Activated naive CD4-positive, alpha-beta T cell treated with anti-CD3 and anti-CD28 coated beads for 36 hours (primary cell): ENCODE measurements at regions of chr10 and their contacts with region 1.

Region 1: GRCh38 chr10:5684318-5684970 is at the start of gene TASOR2:
- DNase-seq: peak; percentile 98
- H3K4me3 Mint-ChIP-seq: peak within 1 kb of the TSS; percentile 87
- H3K27ac Mint-ChIP-seq: peak within 1 kb of the TSS; percentile 94
- H3K4me1 Mint-ChIP-seq: peaks cover 45% of the 10 kb centered on the region
- H3K27me3 Mint-ChIP-seq: no peaks in the 10 kb centered on the region
- total RNA-seq, gene TASOR2: 36.4 to 37.7 TPM

Region 2: DNA sequence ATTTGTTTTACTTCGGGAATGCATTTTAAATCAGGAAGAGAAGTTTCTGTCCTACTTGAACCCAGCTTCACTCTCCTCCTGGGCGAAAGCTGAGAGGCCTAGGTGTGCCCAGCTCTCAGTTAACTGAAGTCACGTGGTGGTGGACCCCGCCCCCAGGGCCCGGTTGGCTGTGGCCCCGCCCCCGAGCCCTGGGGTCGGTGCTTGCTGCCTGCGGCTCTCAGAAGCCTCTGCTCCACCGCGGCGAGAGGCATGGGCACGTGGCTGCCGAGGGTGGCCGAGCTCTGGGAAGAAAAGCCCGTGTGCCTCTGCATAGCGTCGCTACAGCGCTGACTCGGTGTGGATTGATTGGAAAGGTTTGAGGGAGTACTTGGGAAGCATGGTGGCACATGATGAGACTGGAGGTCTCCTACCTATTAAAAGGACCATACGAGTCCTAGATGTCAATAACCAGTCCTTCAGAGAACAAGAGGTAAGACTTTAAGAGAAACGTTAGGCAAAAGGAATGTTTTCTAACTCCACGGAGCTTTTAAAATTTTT is 238.0 kb before region 1 on chr10:
- CTCF ChIA-PET with region 1: no interaction called
- intact Hi-C with region 1: loop called (anchors 10 kb)
- DNase-seq: peak; percentile 77
- H3K4me3 Mint-ChIP-seq: peak overlapping the region; percentile 61
- H3K27ac Mint-ChIP-seq: peak overlapping the region; percentile 33
- H3K4me1 Mint-ChIP-seq: peaks cover 48% of the 10 kb centered on the region
- H3K27me3 Mint-ChIP-seq: no peaks in the 10 kb centered on the region

Region 3: GRCh38 chr10:5666008-5666829 is 18.2 kb before region 1 on chr10 and contains the start of gene ASB13:
- CTCF ChIA-PET with region 1: interaction called, 3 read pairs
- intact Hi-C with region 1: loop called (anchors 1 kb)
- DNase-seq: peak; percentile 45
- H3K4me3 Mint-ChIP-seq: peak within 1 kb of the TSS; percentile 86
- H3K27ac Mint-ChIP-seq: peak within 1 kb of the TSS; percentile 39
- H3K4me1 Mint-ChIP-seq: peaks cover 13% of the 10 kb centered on the region
- H3K27me3 Mint-ChIP-seq: no peaks in the 10 kb centered on the region
- total RNA-seq, gene ASB13: 7.0 to 7.2 TPM

Region 4: DNA sequence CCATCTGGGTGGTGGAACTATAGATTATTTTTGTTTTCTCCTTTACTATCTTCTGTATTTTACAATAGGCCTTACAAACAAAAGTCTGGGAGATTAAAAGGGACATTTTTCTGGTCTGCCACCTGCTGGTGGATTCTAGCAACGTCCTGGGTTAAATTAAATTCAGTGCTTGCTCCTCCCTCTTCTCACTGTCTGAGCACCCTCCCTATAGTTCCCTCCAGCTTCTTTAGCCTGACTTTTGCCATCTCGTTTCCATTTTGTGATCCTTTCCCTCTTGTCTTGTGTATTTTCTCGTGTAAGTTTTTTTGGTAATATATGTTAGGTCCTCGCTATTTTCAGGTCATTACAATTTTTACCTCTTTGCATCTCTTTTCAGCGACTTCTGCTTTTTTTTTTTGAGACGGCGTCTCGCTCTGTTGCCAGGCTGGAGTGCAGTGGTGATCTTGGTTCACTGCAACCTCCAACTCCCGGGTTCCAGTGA is 189.1 kb after region 1 on chr10:
- CTCF ChIA-PET with region 1: interaction called, 8 read pairs
- intact Hi-C with region 1: loop called (anchors 1 kb)
- DNase-seq: peak; percentile 85
- H3K4me3 Mint-ChIP-seq: peak overlapping the region; percentile 44
- H3K27ac Mint-ChIP-seq: no peak overlapping the region
- H3K4me1 Mint-ChIP-seq: peaks cover 3% of the 10 kb centered on the region
- H3K27me3 Mint-ChIP-seq: no peaks in the 10 kb centered on the region

Region 5: DNA sequence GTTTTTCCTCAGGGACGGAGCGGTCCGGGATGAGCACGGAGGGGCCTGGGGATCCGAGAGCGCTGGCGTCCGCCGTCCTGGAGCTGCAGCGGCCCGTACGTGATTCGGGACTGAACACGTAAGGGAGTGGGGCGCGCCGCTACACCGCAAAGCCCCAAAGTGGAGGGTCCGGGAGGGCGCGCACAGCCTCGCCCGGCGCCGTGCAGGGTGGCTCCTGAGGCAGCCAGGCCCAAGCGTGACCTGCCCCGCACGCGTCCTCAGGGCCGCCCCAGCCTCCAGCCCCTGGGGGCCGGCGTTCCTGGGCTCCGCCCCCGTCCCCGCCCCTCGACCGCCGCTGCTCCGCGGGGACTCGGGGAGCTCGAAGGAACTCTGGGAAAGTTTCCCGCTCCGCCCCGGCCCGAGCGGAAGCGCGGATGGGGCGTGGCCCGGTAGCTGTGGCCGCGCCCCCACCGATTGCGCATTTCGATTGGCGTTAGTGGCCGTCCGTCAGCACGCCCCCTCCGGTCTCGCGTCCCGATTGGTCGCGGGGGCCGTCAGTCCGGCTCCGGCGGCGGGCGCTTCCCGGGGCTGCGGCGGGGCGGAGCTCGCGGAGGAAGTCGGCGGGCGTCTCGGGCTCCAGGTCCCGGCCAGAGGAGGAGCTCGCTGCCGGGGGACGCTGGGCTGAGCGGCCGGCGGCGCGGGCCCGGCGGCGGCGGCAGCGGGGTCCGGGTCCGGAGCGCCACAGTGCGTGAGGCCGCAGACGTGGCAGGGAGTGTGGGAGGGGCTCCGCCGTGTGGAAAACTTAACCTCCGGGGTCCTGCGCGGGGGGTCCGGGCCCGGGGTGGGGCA is 205.4 kb after region 1 on chr10 and contains the starts of genes ANKRD16 and FBH1:
- CTCF ChIA-PET with region 1: no interaction called
- intact Hi-C with region 1: loop called (anchors 1 kb)
- DNase-seq: peak; percentile 97
- H3K4me3 Mint-ChIP-seq: peak within 1 kb of the TSS; percentile 92
- H3K27ac Mint-ChIP-seq: peak within 1 kb of the TSS; percentile 74
- H3K4me1 Mint-ChIP-seq: peaks cover 55% of the 10 kb centered on the region
- H3K27me3 Mint-ChIP-seq: no peaks in the 10 kb centered on the region
- total RNA-seq, gene ANKRD16: 3.6 to 3.9 TPM
- total RNA-seq, gene FBH1: 40.4 to 42.7 TPM